IMR-90 (cell line): ENCODE measurements at regions of chr5 and their contacts with region 1.

Region 1: DNA sequence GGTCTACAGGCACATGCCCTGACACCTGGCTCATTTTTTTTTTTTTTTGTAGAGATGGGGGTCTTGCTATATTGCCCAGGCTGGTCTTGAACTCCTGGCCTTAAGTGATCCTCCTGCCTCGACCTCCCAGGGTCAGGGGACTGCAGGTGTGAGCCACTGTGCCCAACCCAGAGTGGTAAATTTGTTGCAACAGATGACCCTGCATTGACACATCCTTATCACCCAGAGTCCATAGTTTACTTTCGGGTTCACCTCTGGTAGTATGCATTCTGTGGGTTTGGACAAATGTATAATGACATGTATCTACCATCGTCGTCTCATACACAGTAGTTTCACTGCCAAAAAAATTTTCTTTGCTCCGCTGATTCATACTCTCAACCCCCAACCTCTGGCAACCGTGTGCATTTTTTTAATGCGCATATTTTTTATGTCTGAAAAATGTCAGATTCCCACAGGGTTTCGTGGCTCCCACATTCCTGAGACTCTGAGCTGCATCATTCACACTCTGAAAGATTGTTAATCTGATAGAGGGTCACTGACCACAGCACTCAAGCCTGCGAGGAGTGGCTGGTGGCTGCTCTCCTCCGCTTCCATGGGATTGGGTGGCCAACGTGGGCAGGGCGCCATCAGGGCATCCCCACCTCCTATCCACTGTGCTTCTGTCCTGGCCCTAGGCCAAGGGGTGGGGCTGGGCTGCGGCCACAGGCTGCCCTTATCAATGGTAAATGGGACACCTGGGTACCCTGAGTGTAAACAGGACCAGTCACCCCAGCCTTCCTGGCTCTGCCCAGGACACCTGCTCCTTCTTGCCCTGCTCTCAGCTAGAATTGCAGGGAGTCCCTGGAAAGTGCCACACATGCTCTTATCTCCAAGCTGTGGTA is 9.6 kb downstream of the NDST1 start:
- DNase-seq: peak; percentile 98
- ATAC-seq: peak; percentile 85
- H3K4me3 ChIP-seq: no peak overlapping the region
- H3K27ac ChIP-seq: peak overlapping the region; percentile 36
- H3K4me1 ChIP-seq: peaks cover 31% of the 10 kb centered on the region
- H3K27me3 ChIP-seq: no peaks in the 10 kb centered on the region
- CTCF ChIP-seq: no peak
- POLR2A ChIP-seq: no peak
- RAD21 ChIP-seq: peak; percentile 4; the same call in 1 of the 2 replicates

Region 2: GRCh38 chr5:149932445-149933350 is 584.8 kb before region 1 on chr5:
- CTCF ChIA-PET with region 1: no interaction called
- POLR2A ChIA-PET with region 1: no interaction called
- dilution Hi-C with region 1: no loop called
- in situ Hi-C with region 1: no loop called
- intact Hi-C with region 1: no loop called
- DNase-seq: no peak
- ATAC-seq: no peak
- H3K4me3 ChIP-seq: no peak overlapping the region
- H3K27ac ChIP-seq: no peak overlapping the region
- H3K4me1 ChIP-seq: peaks cover 3% of the 10 kb centered on the region
- H3K27me3 ChIP-seq: peaks cover 13% of the 10 kb centered on the region
- CTCF ChIP-seq: no peak
- POLR2A ChIP-seq: no peak
- RAD21 ChIP-seq: no peak

Region 3: DNA sequence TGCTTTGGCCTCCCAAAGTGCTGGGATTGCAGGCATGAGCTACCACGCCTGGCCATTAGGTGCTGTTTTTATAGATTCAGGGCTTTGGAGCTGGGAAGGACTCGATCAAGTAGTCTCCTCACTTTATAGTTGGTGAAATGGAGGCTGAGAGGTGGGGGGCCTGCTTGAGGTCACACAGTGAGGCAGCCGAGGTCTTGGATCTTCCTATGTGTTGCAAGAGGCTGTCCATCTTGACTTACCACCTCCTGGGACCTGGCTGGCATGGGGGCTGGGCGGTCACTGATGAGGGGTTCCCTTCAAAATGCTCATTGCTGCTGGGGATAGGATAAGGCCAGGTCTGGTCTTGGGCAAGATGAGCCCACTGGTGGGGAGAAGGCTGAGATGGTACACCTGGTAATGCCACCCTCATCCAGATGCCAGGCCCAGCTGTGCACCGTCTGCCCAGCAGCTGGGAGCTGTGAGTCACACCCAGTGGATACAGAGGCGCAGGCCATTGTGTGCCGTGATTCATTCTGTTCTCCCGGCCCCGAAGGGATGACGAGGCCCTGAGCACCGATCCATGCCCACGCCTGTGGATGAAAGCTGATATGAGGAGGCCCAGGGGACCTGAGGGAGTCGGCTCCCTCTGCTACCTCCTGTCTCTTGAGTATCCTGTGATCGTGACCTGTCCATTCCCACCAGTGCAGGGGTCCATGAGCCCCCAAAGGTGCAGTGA is 20.1 kb before region 1 on chr5:
- CTCF ChIA-PET with region 1: interaction called, 4 read pairs
- POLR2A ChIA-PET with region 1: no interaction called
- dilution Hi-C with region 1: no loop called
- in situ Hi-C with region 1: no loop called
- intact Hi-C with region 1: loop called (anchors 1 kb)
- DNase-seq: peak; percentile 96
- ATAC-seq: peak; percentile 91
- H3K4me3 ChIP-seq: peak overlapping the region; percentile 5; the same call in 1 of the 2 replicates
- H3K27ac ChIP-seq: peak overlapping the region; percentile 66
- H3K4me1 ChIP-seq: peaks cover 56% of the 10 kb centered on the region
- H3K27me3 ChIP-seq: no peaks in the 10 kb centered on the region
- CTCF ChIP-seq: no peak
- POLR2A ChIP-seq: peak; percentile 62; the same call in 1 of the 2 replicates
- RAD21 ChIP-seq: no peak; the same call in 1 of the 2 replicates

Region 4: DNA sequence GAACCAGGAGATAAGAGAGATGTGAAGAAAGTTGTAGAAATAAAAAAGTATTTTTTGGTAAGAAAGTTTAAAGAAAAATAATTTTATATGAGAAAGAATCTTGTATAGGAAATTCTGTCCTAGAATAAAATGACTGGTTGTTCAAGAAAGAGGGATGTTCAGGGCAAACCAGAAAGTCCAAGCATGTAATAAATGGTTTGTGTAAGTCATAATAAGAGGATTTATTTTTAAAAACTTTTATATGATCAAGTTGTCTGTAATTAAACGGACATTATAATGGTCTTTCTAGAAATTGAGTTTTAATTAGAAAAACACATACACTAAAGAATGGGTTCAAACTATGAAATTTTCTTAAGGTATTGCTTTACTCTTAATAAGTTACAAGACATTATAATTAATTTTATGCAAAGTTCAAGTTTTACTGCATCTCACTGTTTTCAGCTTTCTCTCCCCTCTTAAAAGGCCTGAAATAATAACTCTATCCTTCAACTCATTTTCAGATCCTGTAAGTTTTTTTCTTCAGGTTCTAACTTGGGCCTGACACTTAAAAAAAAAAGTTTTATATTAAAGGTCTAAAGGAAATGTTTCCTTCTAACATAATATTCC is 443.4 kb after region 1 on chr5:
- CTCF ChIA-PET with region 1: no interaction called
- POLR2A ChIA-PET with region 1: no interaction called
- dilution Hi-C with region 1: no loop called
- in situ Hi-C with region 1: no loop called
- intact Hi-C with region 1: no loop called
- DNase-seq: no peak
- ATAC-seq: no peak
- H3K4me3 ChIP-seq: no peak overlapping the region
- H3K27ac ChIP-seq: no peak overlapping the region
- H3K4me1 ChIP-seq: no peaks in the 10 kb centered on the region
- H3K27me3 ChIP-seq: no peaks in the 10 kb centered on the region
- CTCF ChIP-seq: no peak
- POLR2A ChIP-seq: no peak
- RAD21 ChIP-seq: no peak